Sciatic nerve (tissue), 2 donors: ENCODE measurements at regions of chr4 and their contacts with region 1.

Region 1: DNA sequence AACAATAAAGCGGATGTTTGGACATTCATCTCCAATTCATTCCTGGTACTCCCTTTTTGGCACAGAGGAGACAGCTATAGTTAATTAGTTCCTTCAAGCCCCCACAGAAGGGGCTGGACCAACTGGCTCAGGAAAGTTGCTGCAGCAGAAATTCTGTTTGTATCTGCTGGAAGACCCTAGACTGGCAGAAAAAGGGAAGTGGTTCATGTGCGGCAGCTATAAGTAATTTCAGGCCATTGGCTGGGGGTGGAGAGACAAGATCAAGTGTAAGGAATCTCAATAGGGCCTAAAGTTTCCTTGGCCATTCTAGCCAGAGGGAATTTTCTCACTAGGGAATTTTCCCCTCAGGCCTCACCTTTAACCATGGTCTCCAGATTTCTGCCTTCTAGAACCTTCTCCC is 89.9 kb upstream of the DHX15 start:
- DNase-seq: no peak
- ATAC-seq: no peak

Region 2: GRCh38 chr4:24753500-24753899 is 79.2 kb after region 1 on chr4:
- intact Hi-C with region 1: no loop called
- DNase-seq: no peak
- ATAC-seq: no peak

Region 3: GRCh38 chr4:24988776-24989175 is 314.5 kb after region 1 on chr4:
- intact Hi-C with region 1: loop called (anchors 5 kb)
- DNase-seq: no peak
- ATAC-seq: peak; percentile 59